ENCODE measurements at regions of chr2 and their contacts with region 1.

Region 1: DNA sequence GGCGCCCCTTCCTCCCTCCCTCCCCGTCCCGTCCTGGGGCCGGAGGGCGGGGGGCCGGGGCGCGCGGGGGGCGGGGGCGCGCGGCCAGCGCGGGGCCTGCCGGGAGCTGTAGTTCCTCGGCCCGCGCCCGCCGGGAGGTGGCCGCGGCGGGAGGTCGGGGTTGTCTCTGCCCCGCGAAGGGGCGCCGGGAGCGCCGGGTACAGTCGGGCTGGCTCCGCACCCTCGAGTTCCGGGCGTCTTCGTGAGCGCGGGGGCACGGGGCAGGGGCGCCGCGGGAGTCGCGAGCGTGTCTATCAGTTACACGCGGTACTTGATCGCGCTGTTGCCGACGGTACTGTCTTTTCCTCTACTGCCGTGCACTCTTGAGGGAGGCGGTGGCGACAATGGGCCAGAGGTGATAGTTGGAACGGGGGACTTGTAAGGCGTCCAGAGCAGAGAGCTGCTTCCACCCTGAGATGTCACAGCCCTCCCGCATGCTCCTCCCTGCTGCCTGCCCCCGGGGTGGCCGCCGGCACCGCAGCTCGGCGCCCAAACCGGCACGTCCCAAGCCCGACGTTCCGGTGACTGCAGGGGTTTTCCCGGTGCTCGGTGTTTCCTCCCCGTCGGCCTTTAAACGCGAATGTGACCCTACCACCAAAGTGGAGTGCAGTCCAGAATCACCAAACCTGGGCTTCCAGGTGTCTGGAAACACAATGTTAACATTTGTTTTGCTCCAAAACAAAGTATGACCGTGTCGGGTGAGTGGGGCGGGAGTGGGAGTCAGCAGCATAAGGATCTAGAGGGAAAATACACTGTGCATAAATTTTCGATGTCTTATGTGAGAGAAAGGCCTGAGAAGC is at the start of gene PRKD3:
- DNase-seq: peak; percentile 54
- H3K4me3 Mint-ChIP-seq: peak within 1 kb of the TSS; percentile 97
- H3K27ac Mint-ChIP-seq: peak within 1 kb of the TSS; percentile 96
- H3K4me1 Mint-ChIP-seq: peaks cover 37% of the 10 kb centered on the region
- H3K27me3 Mint-ChIP-seq: peaks cover 39% of the 10 kb centered on the region
- total RNA-seq, gene PRKD3: 23.9 and 24.3 TPM in 2 replicates

Region 2: DNA sequence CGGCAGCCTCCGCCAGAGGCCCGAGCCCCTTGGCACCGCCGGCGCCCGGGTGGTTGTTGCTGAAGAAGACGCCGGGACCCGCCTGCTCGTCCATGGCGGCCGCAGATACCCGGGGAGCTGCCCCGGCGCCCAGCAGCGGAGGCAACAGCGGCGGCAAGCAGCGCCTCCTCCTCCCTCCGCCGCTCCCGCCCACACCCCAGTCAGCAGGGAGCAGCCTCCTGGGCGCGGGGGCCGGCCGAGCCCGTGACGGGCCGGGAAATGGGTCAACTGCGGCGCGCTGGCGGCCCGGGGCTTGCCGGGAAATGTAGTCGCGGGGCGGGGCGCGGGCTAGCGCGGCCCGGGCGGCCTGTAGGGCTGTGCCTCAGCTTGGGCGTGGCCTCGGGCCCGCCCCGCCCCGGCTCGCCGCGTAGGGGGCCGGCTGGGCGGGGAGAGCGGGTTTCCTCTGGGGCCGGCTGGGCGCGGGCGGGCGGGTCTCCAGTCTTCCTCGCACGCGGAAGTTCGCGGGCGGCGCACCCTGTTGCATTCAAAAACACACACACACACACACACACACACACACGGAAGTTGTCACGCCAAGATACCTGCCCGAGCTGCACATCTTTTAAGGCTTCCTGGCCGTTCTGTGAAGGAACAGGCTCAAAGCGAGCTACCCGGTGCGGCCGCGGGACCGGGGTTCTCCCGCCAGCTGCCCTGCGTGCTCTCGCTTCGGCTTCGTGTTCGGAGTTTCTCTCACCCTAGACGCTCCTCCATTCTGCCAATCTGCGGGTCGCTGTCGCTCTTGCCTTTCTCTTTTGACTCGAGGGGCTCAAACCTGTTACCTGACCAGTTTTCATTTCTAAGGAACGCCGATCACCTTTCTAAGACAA is 358.4 kb before region 1 on chr2 and contains the start of gene STRN:
- intact Hi-C with region 1: loop called (anchors 10 kb)
- DNase-seq: peak; percentile 99
- H3K4me3 Mint-ChIP-seq: peak within 1 kb of the TSS; percentile 95
- H3K27ac Mint-ChIP-seq: peak within 1 kb of the TSS; percentile 98
- H3K4me1 Mint-ChIP-seq: peaks cover 61% of the 10 kb centered on the region
- H3K27me3 Mint-ChIP-seq: no peaks in the 10 kb centered on the region
- total RNA-seq, gene STRN: 28.8 and 29.0 TPM in 2 replicates

Region 3: DNA sequence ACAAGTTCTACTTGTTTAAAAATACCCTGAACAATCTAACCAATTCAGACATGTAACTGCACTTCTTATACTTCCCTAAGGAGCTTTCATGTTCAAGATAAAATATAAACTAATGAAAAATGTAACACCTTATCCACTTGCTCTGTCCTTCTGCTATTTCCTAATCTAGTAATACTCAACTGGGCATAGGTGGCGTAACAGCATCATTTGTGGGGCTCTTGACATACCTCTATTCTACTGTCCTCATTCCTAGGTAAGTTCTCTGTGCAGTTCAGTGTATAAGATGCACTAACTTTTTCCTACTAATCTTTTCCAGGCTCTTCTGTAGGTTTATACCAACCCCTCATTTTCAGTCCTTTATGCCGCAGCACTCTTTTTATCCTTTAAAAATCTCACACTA is 37.0 kb before region 1 on chr2:
- intact Hi-C with region 1: loop called (anchors 5 kb)
- DNase-seq: no peak
- H3K4me3 Mint-ChIP-seq: no peak overlapping the region
- H3K27ac Mint-ChIP-seq: no peak overlapping the region
- H3K4me1 Mint-ChIP-seq: no peaks in the 10 kb centered on the region
- H3K27me3 Mint-ChIP-seq: no peaks in the 10 kb centered on the region

Region 4: DNA sequence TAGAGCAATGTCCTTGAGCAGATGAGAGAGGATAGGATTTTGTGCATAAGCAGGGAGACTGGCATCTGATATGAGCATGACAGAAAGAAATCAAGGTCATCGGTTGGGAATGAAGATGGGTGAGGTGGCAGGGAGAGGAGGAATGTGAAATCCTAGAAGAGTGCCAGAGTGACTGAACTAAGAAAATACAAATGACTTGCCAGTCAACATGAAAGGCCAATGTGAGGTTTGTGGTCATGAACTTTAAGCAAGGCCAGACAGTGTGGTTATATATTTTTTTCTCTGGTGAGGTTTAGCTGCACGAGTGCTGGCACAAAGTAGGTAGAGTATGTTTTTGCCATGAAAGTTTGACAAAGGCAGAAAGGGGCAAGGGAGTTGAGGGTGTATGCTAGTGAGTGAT is 40.7 kb after region 1 on chr2:
- intact Hi-C with region 1: loop called (anchors 1 kb)
- DNase-seq: no peak
- H3K4me3 Mint-ChIP-seq: no peak overlapping the region
- H3K27ac Mint-ChIP-seq: no peak overlapping the region
- H3K4me1 Mint-ChIP-seq: no peaks in the 10 kb centered on the region
- H3K27me3 Mint-ChIP-seq: peaks cover 31% of the 10 kb centered on the region

Region 5: GRCh38 chr2:37585982-37586621 is 261.1 kb after region 1 on chr2:
- intact Hi-C with region 1: loop called (anchors 10 kb)
- DNase-seq: peak; percentile 62
- H3K4me3 Mint-ChIP-seq: peak overlapping the region; percentile 56
- H3K27ac Mint-ChIP-seq: peak overlapping the region; percentile 50
- H3K4me1 Mint-ChIP-seq: peaks cover 71% of the 10 kb centered on the region
- H3K27me3 Mint-ChIP-seq: peaks cover 2% of the 10 kb centered on the region

Region 6: DNA sequence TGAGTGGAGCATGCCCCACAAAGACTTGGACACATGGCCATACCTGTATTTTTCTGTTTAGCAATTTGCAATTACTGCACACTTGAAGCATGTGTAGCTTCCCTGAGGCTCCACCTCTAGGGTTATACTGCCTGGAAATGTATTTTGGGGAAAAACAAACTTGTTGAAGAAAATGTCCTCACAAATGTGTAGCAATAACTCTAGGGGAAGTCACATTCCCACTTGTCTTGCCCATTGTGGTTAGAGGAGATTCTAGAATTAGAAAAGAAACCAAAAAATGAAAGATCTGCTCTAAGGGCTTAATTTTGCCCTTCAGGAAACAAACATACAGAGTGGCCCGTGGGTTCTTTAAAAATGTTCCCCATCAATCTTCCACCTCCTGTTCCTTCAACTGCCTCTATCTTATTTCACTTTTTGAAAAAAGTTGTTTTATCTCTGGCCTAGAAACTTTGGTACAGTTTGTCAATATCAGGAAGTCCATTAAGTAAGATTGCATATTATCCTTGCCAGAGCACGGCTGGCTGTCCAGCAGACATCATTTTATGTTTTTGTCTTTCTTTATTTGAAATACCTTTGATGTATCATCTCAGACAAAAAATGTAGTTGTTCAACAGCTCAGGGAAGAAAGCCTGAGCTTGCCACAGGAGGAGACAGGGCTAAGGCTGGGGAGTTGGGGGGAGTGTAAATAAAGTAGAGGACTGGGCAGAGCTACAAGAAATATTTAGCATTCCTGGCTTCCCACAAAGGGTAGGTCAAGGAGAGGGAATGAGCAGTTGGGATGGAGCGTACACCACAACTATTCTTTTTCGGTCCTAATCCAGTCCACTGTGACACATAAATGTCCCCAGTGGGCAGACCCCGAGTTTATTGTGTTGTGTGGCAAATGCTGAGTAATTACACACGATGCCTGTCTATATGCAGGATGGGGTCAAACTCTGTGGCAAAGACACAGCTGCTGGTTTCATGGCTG is 443.2 kb after region 1 on chr2:
- intact Hi-C with region 1: no loop called
- DNase-seq: no peak
- H3K4me3 Mint-ChIP-seq: no peak overlapping the region
- H3K27ac Mint-ChIP-seq: no peak overlapping the region
- H3K4me1 Mint-ChIP-seq: no peaks in the 10 kb centered on the region
- H3K27me3 Mint-ChIP-seq: peaks cover 2% of the 10 kb centered on the region

Region 7: GRCh38 chr2:37871456-37872191 is 546.6 kb after region 1 on chr2:
- intact Hi-C with region 1: loop called (anchors 2 kb)
- DNase-seq: no peak
- H3K4me3 Mint-ChIP-seq: peak overlapping the region; percentile 83
- H3K27ac Mint-ChIP-seq: peak overlapping the region; percentile 100
- H3K4me1 Mint-ChIP-seq: peaks cover 51% of the 10 kb centered on the region
- H3K27me3 Mint-ChIP-seq: peaks cover 22% of the 10 kb centered on the region